A549 (cell line): ENCODE measurements at regions of chr5 and their contacts with region 1.

Region 1: DNA sequence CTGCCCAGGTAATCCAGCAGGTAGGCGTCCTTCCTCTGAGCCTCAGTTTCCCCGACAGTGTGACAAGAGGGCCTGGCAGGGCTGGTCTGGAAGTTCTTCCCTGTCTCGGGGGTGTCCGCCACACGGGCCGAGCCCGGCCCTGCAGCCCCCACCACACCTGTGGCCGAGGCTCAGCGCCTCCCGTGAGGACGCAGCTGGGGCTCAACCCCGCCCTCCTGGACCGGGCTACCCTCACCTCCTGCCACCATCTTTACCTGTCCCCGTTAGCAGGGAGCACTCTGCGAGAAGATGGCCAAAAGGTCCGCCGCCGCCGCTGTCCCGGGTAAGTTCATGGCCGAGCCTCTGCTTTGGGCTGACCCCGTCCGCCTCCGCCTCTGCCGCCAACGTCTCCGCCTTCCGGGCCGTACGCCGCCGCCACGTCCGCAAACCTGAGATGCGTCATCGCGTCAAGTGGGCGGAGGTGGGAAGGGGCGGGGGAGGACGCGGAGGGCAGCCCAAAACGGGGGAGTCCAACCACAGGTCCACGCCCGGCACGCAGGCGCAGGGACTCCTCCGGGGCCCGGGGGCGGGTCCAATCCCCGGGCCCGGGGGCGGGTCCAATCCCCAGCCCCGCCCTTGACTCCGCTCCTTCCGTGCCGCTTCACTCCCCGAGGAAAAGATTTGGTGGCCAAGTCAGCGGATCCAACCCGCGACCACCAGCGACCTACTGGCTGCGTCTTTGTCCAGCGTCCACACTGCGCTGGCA is at the start of gene LYSMD3:
- DNase-seq: peak; percentile 89 to 97
- ATAC-seq: peak; percentile 92 to 97
- H3K4me3 ChIP-seq: peak within 1 kb of the TSS; percentile 95
- H3K27ac ChIP-seq: peak within 1 kb of the TSS; percentile 93
- H3K4me1 ChIP-seq: peaks cover 21% of the 10 kb centered on the region
- CTCF ChIP-seq: no peak
- EP300 ChIP-seq: no peak
- POLR2A ChIP-seq: peak; percentile 82
- RAD21 ChIP-seq: no peak
- polyA plus RNA-seq, gene LYSMD3: 17.1 and 24.1 TPM in 2 replicates

Region 2: DNA sequence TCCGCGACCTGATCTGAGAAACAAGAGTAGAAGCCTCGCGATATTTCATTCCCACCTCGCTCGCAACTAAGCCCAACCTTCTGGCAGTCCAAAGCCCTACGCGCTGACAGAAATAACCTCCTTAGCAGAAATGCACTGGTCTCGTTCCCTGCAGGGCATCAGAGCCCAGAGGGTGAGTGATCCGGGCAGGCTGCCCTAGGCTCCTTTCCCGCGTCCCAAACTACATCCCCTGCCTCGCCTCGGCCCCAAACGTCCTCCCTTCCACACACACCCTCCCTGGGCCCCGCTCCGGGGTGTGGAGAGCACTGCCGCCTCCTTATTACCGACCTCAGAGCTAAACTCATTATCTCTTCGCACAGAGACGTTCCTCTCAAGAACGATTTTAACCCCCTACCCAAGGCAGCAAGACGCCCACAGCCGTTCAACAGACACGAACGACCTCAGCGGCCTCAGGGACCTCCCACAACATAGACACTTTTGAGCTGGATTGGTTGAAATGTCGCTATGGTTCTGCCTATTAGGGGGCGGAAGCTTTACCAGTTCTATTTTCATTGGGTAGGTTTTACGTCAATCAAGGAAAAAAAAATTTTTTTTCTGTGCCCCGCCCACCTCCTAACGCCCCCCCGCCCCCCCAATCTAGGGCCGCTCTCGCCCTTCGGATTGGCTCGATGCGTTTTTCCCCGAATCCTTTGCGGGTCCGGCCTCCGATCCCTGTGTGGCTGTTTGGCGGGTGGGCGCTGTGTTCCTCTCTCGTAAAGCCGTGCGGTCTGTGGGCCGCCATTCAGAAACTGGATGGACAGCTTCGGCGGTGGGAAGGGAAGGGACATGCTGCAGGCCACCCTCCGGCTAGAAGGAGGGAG is 119.8 kb before region 1 on chr5 and contains the start of gene CETN3:
- CTCF ChIA-PET with region 1: interaction called, 4 read pairs
- POLR2A ChIA-PET with region 1: interaction called, 13 read pairs
- DNase-seq: peak; percentile 84 to 96
- ATAC-seq: peak; percentile 96 to 98
- H3K4me3 ChIP-seq: peak within 1 kb of the TSS; percentile 89
- H3K27ac ChIP-seq: peak within 1 kb of the TSS; percentile 93 to 96
- H3K4me1 ChIP-seq: peaks cover 25% of the 10 kb centered on the region; the same call in 2 of the 3 replicates
- CTCF ChIP-seq: 0 out of 3 replicates have a peak, but pooled peaks have one; percentile 8
- EP300 ChIP-seq: no peak
- POLR2A ChIP-seq: peak; percentile 97
- RAD21 ChIP-seq: no peak
- polyA plus RNA-seq, gene CETN3: 18.4 and 50.8 TPM in 2 replicates

Region 3: GRCh38 chr5:90421136-90421535 is 108.2 kb before region 1 on chr5:
- CTCF ChIA-PET with region 1: interaction called, 12 read pairs
- POLR2A ChIA-PET with region 1: no interaction called
- DNase-seq: peak in 1 of 2 experiments; percentile 37
- ATAC-seq: peak; percentile 94
- H3K4me3 ChIP-seq: no peak overlapping the region
- H3K27ac ChIP-seq: no peak overlapping the region
- H3K4me1 ChIP-seq: no peaks in the 10 kb centered on the region
- CTCF ChIP-seq: 0 out of 3 replicates have a peak, but pooled peaks have one; percentile 11
- EP300 ChIP-seq: no peak
- POLR2A ChIP-seq: no peak
- RAD21 ChIP-seq: no peak

Region 4: GRCh38 chr5:90434116-90434714 is 95.2 kb before region 1 on chr5:
- CTCF ChIA-PET with region 1: interaction called, 60 read pairs
- POLR2A ChIA-PET with region 1: no interaction called
- DNase-seq: peak in 1 of 2 experiments; percentile 57
- ATAC-seq: peak; percentile 93 to 97; a peak in 4 of 6 replicates
- H3K4me3 ChIP-seq: no peak overlapping the region
- H3K27ac ChIP-seq: no peak overlapping the region
- H3K4me1 ChIP-seq: no peaks in the 10 kb centered on the region
- CTCF ChIP-seq: peak; percentile 53
- EP300 ChIP-seq: no peak
- POLR2A ChIP-seq: no peak
- RAD21 ChIP-seq: peak; percentile 66 to 79

Region 5: DNA sequence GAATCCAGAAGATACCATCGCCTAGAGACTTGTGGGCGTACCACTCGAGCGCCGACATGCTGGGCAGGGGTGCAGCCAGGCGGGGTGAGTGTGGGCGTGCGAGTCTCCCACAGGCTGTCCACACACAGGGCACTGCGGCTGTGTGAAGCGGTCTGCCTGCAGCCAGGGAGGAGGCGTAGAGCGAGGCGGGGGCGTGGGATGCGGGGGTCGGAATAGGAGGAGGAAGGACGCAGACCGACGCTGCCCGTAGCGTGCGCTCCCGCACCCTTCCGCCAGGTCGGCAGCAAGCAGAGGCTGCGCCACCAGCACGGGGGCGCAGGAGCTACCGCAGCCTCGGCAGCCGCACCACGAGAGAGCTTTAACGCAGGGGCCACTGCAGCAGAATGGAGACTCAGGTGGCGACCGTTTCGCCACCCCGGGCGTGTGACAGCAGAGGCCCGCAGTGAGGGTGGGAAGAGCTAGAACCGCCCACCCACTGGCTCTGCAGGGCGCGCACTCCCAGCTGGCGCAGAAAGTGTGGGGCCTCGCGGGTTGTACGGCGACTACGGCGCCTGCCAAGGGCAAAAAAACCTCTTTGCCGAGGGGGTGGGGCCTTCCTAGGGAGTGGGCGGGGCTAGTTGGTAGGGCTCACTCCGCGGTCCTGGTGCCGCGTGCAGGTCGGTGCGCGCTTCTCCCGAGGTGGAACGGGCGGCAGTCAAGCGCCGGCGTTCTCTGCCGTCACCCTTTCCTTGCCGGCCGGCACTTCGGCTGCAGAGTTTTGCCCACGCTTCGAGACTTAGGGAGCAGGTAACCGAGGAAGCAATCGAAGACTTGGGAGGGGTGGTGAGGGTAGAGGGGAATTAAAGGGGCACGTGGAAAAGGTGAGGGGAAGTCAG is 54.9 kb before region 1 on chr5 and contains the starts of genes MBLAC2 and POLR3G:
- CTCF ChIA-PET with region 1: interaction called, 7 read pairs
- POLR2A ChIA-PET with region 1: interaction called, 13 read pairs
- DNase-seq: peak; percentile 80 to 96
- ATAC-seq: peak; percentile 91 to 94
- H3K4me3 ChIP-seq: peak within 1 kb of the TSS; percentile 80
- H3K27ac ChIP-seq: peak within 1 kb of the TSS; percentile 92 to 94
- H3K4me1 ChIP-seq: peaks cover 13% of the 10 kb centered on the region
- CTCF ChIP-seq: no peak; the same call in 2 of the 3 replicates
- EP300 ChIP-seq: no peak
- POLR2A ChIP-seq: peak; percentile 77
- RAD21 ChIP-seq: 0 out of 5 replicates have a peak, but pooled peaks of 1 of the 2 experiments have one; percentile 2
- polyA plus RNA-seq, gene MBLAC2: 4.4 and 5.3 TPM in 2 replicates
- polyA plus RNA-seq, gene POLR3G: 15.7 and 22.6 TPM in 2 replicates

Region 6: DNA sequence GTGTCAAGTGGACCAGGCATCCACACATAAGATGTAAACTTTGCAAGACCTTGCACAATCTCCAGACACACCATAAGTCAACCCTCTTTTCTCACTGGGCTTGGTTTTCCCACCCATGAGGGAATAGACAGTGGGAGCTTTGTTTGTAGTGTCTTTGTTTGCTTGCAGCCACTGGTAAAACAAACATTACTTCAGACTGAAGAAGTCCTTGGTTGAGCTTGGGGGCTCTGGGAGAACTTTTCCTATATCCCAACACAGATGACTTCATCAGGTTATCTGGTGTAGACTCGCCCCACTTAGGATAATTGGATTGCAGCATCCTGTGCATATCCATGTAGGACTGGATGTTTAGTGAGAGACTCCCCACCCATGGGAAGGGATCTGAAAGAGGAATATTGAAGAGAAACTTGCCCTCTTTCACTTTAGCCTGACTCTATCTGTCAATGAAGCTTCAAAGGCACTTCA is 17.7 kb after region 1 on chr5:
- CTCF ChIA-PET with region 1: interaction called, 11 read pairs
- POLR2A ChIA-PET with region 1: no interaction called
- DNase-seq: peak in 1 of 2 experiments; percentile 71
- ATAC-seq: peak; percentile 40 to 83; a peak in 3 of 6 replicates
- H3K4me3 ChIP-seq: no peak overlapping the region
- H3K27ac ChIP-seq: no peak overlapping the region
- H3K4me1 ChIP-seq: peaks cover 14% of the 10 kb centered on the region; the same call in 2 of the 3 replicates
- CTCF ChIP-seq: no peak
- EP300 ChIP-seq: no peak
- POLR2A ChIP-seq: no peak
- RAD21 ChIP-seq: no peak